Calu3 (cell line): ENCODE measurements at regions of chr11 and their contacts with region 1.

Region 1: DNA sequence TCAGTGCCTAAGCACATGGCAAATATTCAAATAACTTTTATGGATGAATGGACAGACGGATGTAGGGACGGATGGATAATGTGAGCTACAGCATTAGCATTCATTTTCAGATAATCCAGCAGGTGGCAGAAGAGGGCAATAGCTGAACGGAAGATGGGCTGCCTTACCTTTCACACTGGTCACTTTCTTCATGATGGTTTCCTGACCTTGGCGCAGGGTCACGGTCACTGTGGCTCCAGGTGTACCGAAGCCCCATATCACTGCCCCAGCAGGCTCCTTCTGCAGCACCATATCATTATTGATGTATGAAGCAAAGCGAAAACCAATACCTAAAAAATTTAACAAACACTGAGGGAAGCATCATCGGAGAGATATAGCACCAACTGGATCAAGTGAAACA is 4.3 kb downstream of the SIAE start:
- DNase-seq: peak; percentile 51
- H3K4me3 Mint-ChIP-seq: no peak overlapping the region
- H3K27ac Mint-ChIP-seq: no peak overlapping the region
- H3K4me1 Mint-ChIP-seq: no peaks in the 10 kb centered on the region
- H3K27me3 Mint-ChIP-seq: no peaks in the 10 kb centered on the region
- CTCF ChIP-seq: peak; percentile 34

Region 2: GRCh38 chr11:124577716-124578427 is 91.3 kb before region 1 on chr11:
- CTCF ChIA-PET with region 1: no interaction called
- intact Hi-C with region 1: no loop called
- DNase-seq: no peak
- H3K4me3 Mint-ChIP-seq: no peak overlapping the region
- H3K27ac Mint-ChIP-seq: no peak overlapping the region
- H3K4me1 Mint-ChIP-seq: no peaks in the 10 kb centered on the region
- H3K27me3 Mint-ChIP-seq: peaks cover under 1% of the 10 kb centered on the region
- CTCF ChIP-seq: no peak

Region 3: GRCh38 chr11:124758317-124759203 is 89.4 kb after region 1 on chr11:
- CTCF ChIA-PET with region 1: interaction called, 16 read pairs
- intact Hi-C with region 1: loop called (anchors 1 kb)
- DNase-seq: peak; percentile 83
- H3K4me3 Mint-ChIP-seq: peak overlapping the region; percentile 73
- H3K27ac Mint-ChIP-seq: no peak overlapping the region
- H3K4me1 Mint-ChIP-seq: peaks cover 15% of the 10 kb centered on the region
- H3K27me3 Mint-ChIP-seq: no peaks in the 10 kb centered on the region
- CTCF ChIP-seq: peak; percentile 72

Region 4: GRCh38 chr11:124793466-124794278 is 124.5 kb after region 1 on chr11:
- CTCF ChIA-PET with region 1: interaction called, 5 read pairs
- intact Hi-C with region 1: loop called (anchors 1 kb)
- DNase-seq: peak; percentile 15
- H3K4me3 Mint-ChIP-seq: no peak overlapping the region
- H3K27ac Mint-ChIP-seq: no peak overlapping the region
- H3K4me1 Mint-ChIP-seq: no peaks in the 10 kb centered on the region
- H3K27me3 Mint-ChIP-seq: no peaks in the 10 kb centered on the region
- CTCF ChIP-seq: peak; percentile 36

Region 5: DNA sequence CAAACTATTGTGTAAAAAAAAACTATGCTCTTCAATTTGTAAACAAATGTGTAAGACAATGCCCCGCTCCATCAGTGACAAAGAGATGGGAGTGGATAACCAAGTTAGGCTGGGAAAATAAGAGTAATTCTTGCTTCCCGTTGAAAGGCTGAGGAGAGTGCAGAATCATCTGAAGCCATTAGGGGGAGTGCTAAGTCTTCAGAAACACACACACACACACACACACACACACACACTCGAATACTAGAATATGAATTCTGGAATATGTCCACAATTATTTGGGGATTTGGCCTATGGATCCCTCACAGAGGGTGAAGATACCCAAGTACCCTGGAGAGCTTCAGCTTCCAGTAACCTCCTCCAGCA is 168.3 kb after region 1 on chr11:
- CTCF ChIA-PET with region 1: interaction called, 7 read pairs
- intact Hi-C with region 1: loop called (anchors 1 kb)
- DNase-seq: peak; percentile 21
- H3K4me3 Mint-ChIP-seq: no peak overlapping the region
- H3K27ac Mint-ChIP-seq: no peak overlapping the region
- H3K4me1 Mint-ChIP-seq: no peaks in the 10 kb centered on the region
- H3K27me3 Mint-ChIP-seq: peaks cover 45% of the 10 kb centered on the region
- CTCF ChIP-seq: no peak

Region 6: GRCh38 chr11:124865921-124866583 is 196.9 kb after region 1 on chr11:
- CTCF ChIA-PET with region 1: interaction called, 9 read pairs
- intact Hi-C with region 1: loop called (anchors 1 kb)
- DNase-seq: peak; percentile 32
- H3K4me3 Mint-ChIP-seq: no peak overlapping the region
- H3K27ac Mint-ChIP-seq: no peak overlapping the region
- H3K4me1 Mint-ChIP-seq: peaks cover 31% of the 10 kb centered on the region
- H3K27me3 Mint-ChIP-seq: peaks cover 100% of the 10 kb centered on the region
- CTCF ChIP-seq: peak; percentile 41